MCF 10A (cell line): ENCODE measurements at regions of chr20 and their contacts with region 1.

Region 1: GRCh38 chr20:23200918-23201317 is 114.8 kb upstream of the CD93 start:
- DNase-seq: peak; percentile 79
- H3K4me3 Mint-ChIP-seq: no peak overlapping the region
- H3K27ac Mint-ChIP-seq: no peak overlapping the region
- H3K4me1 Mint-ChIP-seq: peaks cover 16% of the 10 kb centered on the region
- H3K27me3 Mint-ChIP-seq: no peaks in the 10 kb centered on the region
- CTCF ChIP-seq: peak; percentile 71

Region 2: GRCh38 chr20:22723648-22724047 is 477.3 kb before region 1 on chr20:
- CTCF ChIA-PET with region 1: interaction called, 44 read pairs
- POLR2A ChIA-PET with region 1: interaction called, 4 read pairs
- intact Hi-C with region 1: loop called (anchors 2 kb)
- DNase-seq: no peak
- H3K4me3 Mint-ChIP-seq: no peak overlapping the region
- H3K27ac Mint-ChIP-seq: no peak overlapping the region
- H3K4me1 Mint-ChIP-seq: peaks cover 7% of the 10 kb centered on the region
- H3K27me3 Mint-ChIP-seq: no peaks in the 10 kb centered on the region
- CTCF ChIP-seq: no peak

Region 3: GRCh38 chr20:23106261-23106851 is 94.6 kb before region 1 on chr20:
- CTCF ChIA-PET with region 1: interaction called, 32 read pairs
- POLR2A ChIA-PET with region 1: no interaction called
- intact Hi-C with region 1: no loop called
- DNase-seq: no peak
- H3K4me3 Mint-ChIP-seq: no peak overlapping the region
- H3K27ac Mint-ChIP-seq: no peak overlapping the region
- H3K4me1 Mint-ChIP-seq: peaks cover 8% of the 10 kb centered on the region
- H3K27me3 Mint-ChIP-seq: no peaks in the 10 kb centered on the region
- CTCF ChIP-seq: no peak

Region 4: GRCh38 chr20:23161968-23162696 is 38.8 kb before region 1 on chr20:
- CTCF ChIA-PET with region 1: interaction called, 13 read pairs
- POLR2A ChIA-PET with region 1: interaction called, 3 read pairs
- intact Hi-C with region 1: no loop called
- DNase-seq: peak; percentile 100
- H3K4me3 Mint-ChIP-seq: no peak overlapping the region
- H3K27ac Mint-ChIP-seq: peak overlapping the region; percentile 92
- H3K4me1 Mint-ChIP-seq: peaks cover 64% of the 10 kb centered on the region
- H3K27me3 Mint-ChIP-seq: no peaks in the 10 kb centered on the region
- CTCF ChIP-seq: no peak

Region 5: DNA sequence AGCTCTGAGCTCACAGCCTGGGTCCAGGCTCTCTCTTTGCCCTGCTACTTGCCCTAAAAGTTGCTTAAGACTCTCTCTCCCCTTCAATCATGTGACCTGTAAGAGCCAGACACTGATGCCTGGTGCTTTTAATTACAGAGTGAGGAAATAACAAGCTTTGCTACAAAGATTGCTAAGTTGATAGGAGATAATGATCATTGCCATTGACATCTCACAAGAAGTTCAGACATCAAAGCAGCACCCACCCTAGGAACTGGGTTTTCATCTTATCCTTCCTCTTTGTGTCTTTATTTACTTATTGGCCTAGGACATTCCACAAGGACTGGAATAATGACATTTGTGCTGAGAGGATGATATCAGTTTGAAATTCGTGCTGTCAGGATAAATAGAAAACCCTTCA is 11.1 kb after region 1 on chr20:
- CTCF ChIA-PET with region 1: interaction called, 38 read pairs
- POLR2A ChIA-PET with region 1: no interaction called
- intact Hi-C with region 1: no loop called
- DNase-seq: no peak
- H3K4me3 Mint-ChIP-seq: no peak overlapping the region
- H3K27ac Mint-ChIP-seq: peak overlapping the region; percentile 35
- H3K4me1 Mint-ChIP-seq: no peaks in the 10 kb centered on the region
- H3K27me3 Mint-ChIP-seq: no peaks in the 10 kb centered on the region
- CTCF ChIP-seq: no peak